ENCODE measurements at regions of chr22 and their contacts with region 1.

Region 1: GRCh38 chr22:23893943-23894709 is at the start of gene MIF:
- DNase-seq: peak; percentile 98
- ATAC-seq: peak; percentile 87
- H3K4me3 Mint-ChIP-seq: peak within 1 kb of the TSS; percentile 91
- H3K27ac Mint-ChIP-seq: peak within 1 kb of the TSS; percentile 98
- H3K4me1 Mint-ChIP-seq: peaks cover 23% of the 10 kb centered on the region
- H3K27me3 Mint-ChIP-seq: no peaks in the 10 kb centered on the region
- total RNA-seq, gene MIF: 1,478 to 1,739 TPM

Region 2: DNA sequence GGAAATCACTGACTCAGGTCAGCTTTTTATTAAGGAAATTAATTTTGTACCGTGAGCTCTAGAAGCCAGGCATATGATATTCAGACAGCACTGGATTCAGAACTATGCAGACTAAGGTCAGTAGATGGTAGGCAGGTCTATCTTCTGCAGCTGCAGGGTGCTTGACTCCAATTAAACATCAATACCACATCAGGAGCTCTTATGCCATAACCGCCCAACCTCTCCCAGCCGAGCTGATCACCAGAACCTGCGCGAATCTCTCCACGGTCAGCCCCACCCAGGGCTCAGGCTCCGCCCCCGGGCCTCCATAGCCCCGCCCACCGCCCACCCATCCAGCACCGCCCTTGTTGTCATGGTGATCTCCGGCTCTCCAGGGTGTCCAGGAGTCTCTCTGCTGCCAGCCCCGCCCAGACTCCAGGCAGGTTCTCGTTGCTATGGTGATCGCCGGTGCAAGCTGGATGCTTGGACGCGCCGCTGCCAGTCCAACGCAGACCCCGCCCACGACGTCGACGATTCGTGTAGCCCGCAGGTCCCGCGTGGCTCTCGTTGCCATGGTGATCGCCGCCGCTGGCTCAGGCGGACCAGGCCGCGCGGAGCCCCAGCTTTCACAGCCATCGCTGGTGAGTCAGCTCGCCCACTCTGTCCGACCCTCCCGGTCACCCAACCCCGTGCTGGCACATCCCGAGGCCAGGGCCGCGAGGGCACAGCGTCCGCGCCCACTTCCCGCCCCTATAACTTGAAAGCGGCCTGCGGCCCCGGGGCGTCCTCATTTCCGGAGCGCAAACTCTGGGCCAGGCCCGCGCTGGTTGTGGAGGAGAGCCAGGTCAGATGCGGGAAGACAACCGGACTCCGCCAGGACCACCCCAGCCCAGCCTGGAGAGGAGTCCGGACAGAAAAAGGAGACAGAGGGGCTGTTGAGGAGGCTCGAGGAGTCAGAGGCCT is 748.9 kb before region 1 on chr22 and contains the start of gene RAB36:
- CTCF ChIA-PET with region 1: no interaction called
- POLR2A ChIA-PET with region 1: no interaction called
- intact Hi-C with region 1: loop called in 1 of 2 experiments (anchors 5 kb)
- DNase-seq: peak; percentile 93
- ATAC-seq: peak; percentile 60
- H3K4me3 Mint-ChIP-seq: peak within 1 kb of the TSS; percentile 49
- H3K27ac Mint-ChIP-seq: no peak within 1 kb of the TSS
- H3K4me1 Mint-ChIP-seq: peaks cover 41% of the 10 kb centered on the region
- H3K27me3 Mint-ChIP-seq: no peaks in the 10 kb centered on the region
- total RNA-seq, gene RAB36: 0.35 to 0.50 TPM

Region 3: DNA sequence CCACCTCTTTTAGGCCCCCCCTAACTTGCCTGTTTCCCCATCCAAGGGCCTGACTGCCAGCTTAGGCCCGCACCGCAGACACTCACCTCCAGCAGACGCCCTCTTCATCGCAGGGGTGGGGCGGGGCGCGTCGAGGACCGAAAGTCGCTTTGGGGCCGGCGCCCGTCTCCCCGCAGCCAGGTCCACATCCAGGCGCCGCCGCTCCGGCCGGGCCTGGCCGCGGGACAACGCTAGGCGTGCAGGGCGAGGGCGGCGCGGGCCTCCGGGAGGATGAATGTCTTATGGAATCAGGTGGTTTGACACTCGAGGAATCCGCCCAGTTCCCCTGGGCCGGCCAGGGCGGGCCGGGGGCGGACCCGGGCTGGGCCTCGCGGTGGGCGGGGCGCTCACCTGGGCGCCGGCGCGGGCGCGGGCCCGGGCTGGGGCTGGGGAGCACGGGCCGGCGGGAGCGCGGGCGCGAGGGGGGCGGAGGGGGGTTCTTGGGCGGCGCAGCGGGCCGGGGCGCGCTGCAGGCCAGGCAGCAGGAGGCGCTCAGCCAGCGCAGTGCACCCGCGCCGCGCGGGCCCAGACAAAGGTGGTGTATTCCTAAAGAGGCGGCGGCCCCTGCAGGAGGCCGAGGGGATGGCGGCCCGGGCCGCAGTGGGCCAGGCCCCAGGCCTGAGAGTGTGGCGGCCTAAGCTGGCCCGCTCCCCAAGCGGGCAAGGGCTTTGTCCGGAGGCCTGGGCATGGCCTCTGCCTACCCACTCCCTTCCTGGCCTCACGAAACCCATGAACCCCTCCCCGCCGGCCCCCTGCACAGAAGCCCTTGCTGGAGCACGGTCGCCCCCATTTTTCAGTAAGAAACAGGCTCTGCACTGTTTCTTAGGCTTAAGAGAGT is 491.6 kb before region 1 on chr22:
- CTCF ChIA-PET with region 1: no interaction called
- POLR2A ChIA-PET with region 1: no interaction called
- intact Hi-C with region 1: no loop called
- DNase-seq: peak; percentile 82
- ATAC-seq: peak; percentile 95
- H3K4me3 Mint-ChIP-seq: no peak overlapping the region
- H3K27ac Mint-ChIP-seq: no peak overlapping the region
- H3K4me1 Mint-ChIP-seq: no peaks in the 10 kb centered on the region
- H3K27me3 Mint-ChIP-seq: no peaks in the 10 kb centered on the region

Region 4: GRCh38 chr22:23767673-23768548 is 126.2 kb before region 1 on chr22 and contains the start of gene CHCHD10:
- CTCF ChIA-PET with region 1: interaction called, 5 read pairs
- POLR2A ChIA-PET with region 1: no interaction called
- intact Hi-C with region 1: loop called in 1 of 2 experiments (anchors 1 kb)
- DNase-seq: peak; percentile 87
- ATAC-seq: peak; percentile 66
- H3K4me3 Mint-ChIP-seq: peak within 1 kb of the TSS; percentile 75
- H3K27ac Mint-ChIP-seq: peak within 1 kb of the TSS; percentile 72
- H3K4me1 Mint-ChIP-seq: peaks cover 36% of the 10 kb centered on the region
- H3K27me3 Mint-ChIP-seq: no peaks in the 10 kb centered on the region
- total RNA-seq, gene CHCHD10: 131 to 134 TPM

Region 5: GRCh38 chr22:23849009-23850006 is 44.8 kb before region 1 on chr22:
- CTCF ChIA-PET with region 1: interaction called, 11 read pairs
- POLR2A ChIA-PET with region 1: no interaction called
- intact Hi-C with region 1: no loop called
- DNase-seq: peak; percentile 93
- ATAC-seq: peak; percentile 96
- H3K4me3 Mint-ChIP-seq: no peak overlapping the region
- H3K27ac Mint-ChIP-seq: no peak overlapping the region
- H3K4me1 Mint-ChIP-seq: no peaks in the 10 kb centered on the region
- H3K27me3 Mint-ChIP-seq: no peaks in the 10 kb centered on the region

Region 6: DNA sequence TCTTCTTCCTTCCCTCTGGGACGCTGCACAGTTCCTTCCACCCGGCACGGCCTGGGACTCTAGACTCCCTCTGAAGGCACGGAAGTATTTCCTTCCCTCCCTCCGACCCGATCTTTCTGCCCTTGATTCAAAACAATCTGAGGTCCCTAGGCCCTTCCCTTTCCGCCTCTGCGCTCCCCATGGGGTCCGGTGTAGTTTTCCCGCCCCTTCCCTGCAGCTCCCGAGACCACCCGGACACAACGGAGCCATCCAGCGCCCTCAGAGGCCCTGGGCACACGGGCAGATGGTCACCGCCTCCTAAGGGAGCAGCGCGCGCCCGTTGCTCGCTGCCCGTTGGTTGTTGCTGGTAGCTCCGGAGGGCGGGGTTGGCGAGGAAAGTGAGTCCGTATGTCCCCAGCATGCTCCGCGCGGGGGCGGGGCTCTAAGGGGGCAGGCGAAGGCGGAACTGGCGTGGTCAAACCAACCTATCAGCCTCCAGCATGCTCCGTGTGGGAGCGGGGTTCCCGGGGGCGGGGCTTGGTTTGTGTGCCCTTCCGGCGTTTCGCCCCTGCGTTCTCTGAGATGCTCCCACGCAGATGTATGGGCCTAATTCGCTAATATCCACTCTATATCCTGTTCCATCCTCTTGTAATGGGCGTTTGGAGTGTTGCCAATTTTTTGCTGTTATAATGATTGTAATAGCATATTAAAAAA is 19.7 kb after region 1 on chr22:
- CTCF ChIA-PET with region 1: interaction called, 24 read pairs
- POLR2A ChIA-PET with region 1: interaction called, 24 read pairs
- intact Hi-C with region 1: loop called (anchors 1 kb)
- DNase-seq: peak; percentile 100
- ATAC-seq: peak; percentile 99
- H3K4me3 Mint-ChIP-seq: peak overlapping the region; percentile 85
- H3K27ac Mint-ChIP-seq: peak overlapping the region; percentile 98
- H3K4me1 Mint-ChIP-seq: peaks cover 23% of the 10 kb centered on the region
- H3K27me3 Mint-ChIP-seq: no peaks in the 10 kb centered on the region

Region 7: GRCh38 chr22:24433813-24434470 is 539.8 kb after region 1 on chr22:
- CTCF ChIA-PET with region 1: interaction called, 3 read pairs
- POLR2A ChIA-PET with region 1: no interaction called
- intact Hi-C with region 1: loop called in 1 of 2 experiments (anchors 1 kb)
- DNase-seq: no peak
- ATAC-seq: peak; percentile 81
- H3K4me3 Mint-ChIP-seq: peak overlapping the region; percentile 70
- H3K27ac Mint-ChIP-seq: peak overlapping the region; percentile 99
- H3K4me1 Mint-ChIP-seq: peaks cover 92% of the 10 kb centered on the region
- H3K27me3 Mint-ChIP-seq: no peaks in the 10 kb centered on the region